Ascending aorta (tissue), 2 donors: ENCODE measurements at regions of chr5 and their contacts with region 1.

Region 1: DNA sequence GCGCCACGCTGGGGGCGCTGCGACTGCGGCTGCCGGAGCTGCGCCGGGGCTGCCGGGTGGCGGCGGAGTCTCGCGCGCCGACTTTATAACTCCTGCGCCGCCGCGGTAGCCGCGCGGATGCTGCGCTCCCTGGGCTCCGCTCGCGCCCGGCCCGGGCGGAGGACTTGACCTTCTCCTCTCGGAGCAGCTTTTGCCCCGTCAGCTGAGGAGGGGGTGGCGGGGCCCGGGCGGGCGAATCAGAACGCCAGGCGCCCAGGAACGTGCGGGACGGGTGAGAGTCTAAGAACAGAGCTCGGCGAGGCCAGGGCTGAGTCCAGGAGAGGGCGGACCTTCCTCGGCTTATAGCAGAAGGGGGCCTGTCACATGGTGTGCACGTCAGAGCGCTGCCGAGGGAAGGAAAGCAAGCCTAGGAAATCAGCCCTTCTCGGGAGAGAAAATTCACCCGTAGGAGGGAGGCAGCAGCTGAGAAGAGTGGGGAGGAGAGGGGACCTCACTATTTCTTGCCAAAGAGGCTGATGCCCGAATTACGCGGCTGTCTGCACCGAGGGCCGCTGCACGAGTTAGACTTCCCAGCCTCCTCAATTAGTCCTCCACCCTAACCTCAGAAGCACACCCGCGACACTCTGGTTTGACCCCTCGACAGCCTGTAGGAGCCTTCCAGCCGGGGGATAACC is at the start of gene FOXD1:
- DNase-seq: peak; percentile 81 to 95
- H3K4me3 ChIP-seq: peak within 1 kb of the TSS; percentile 68 to 86
- H3K27ac ChIP-seq: peak within 1 kb of the TSS; percentile 89 to 96
- H3K4me1 ChIP-seq: peaks cover 3 to 13% of the 10 kb centered on the region in 2 donors
- H3K27me3 ChIP-seq: no peaks in the 10 kb centered on the region
- CTCF ChIP-seq: no peak
- total RNA-seq, gene FOXD1: 7.1 TPM

Region 2: GRCh38 chr5:72847989-72848473 is 600.6 kb before region 1 on chr5:
- intact Hi-C with region 1: no loop called
- DNase-seq: peak; percentile 59 to 94
- H3K4me3 ChIP-seq: peak overlapping the region; percentile 89 to 97
- H3K27ac ChIP-seq: peak overlapping the region; percentile 90 to 94
- H3K4me1 ChIP-seq: peaks cover 8 to 41% of the 10 kb centered on the region in 2 donors
- H3K27me3 ChIP-seq: no peaks in the 10 kb centered on the region
- CTCF ChIP-seq: peak in 2 of 3 experiments; percentile 3 to 17

Region 3: GRCh38 chr5:73088026-73088425 is 360.6 kb before region 1 on chr5:
- intact Hi-C with region 1: loop called (anchors 2 kb)
- DNase-seq: no peak
- H3K4me3 ChIP-seq: no peak overlapping the region
- H3K27ac ChIP-seq: no peak overlapping the region
- H3K4me1 ChIP-seq: no peaks in the 10 kb centered on the region
- H3K27me3 ChIP-seq: no peaks in the 10 kb centered on the region
- CTCF ChIP-seq: no peak

Region 4: DNA sequence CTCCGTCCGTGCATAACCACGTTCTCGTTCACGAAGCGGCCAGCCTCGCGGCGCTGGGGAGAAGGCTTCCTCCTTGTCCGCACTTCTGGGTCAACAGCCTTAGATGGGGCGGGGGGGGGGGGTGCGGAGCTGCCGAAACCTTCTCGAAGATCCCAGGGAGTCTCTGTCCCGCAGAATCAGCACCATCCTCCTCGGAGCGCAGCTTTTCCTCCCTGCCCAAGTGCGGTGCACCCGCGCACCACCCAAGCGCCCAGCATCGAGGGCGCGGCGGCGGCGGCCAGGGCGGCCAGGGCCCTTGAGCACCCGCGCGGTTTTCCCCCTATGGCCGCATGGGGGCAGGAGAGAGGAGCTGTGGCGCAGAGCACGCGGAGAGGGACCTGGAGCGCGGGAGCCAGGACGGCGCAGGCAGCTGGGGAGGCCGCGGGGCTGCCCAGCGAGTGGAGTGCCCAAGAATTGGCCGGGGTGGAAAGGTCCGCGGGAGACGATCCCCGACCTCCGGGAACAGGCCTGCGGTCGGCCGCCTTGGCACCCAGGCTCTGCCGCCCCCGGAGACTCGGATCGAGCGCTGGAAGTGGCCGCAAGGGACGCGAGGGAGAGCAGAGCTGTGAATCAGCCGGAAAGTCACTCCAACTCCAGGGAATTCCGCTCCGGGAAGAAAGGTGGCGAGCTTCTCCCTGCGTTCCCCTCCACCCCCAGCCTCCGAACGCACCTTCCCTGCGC is 232.5 kb before region 1 on chr5:
- intact Hi-C with region 1: loop called (anchors 1 kb)
- DNase-seq: peak in 1 of 2 donors; percentile 90
- H3K4me3 ChIP-seq: peak overlapping the region; percentile 43 to 63
- H3K27ac ChIP-seq: peak overlapping the region; percentile 38 to 70
- H3K4me1 ChIP-seq: no peaks in the 10 kb centered on the region
- H3K27me3 ChIP-seq: no peaks in the 10 kb centered on the region
- CTCF ChIP-seq: peak; percentile 77 to 89 (median 88)

Region 5: GRCh38 chr5:73280821-73281746 is 167.5 kb before region 1 on chr5:
- intact Hi-C with region 1: loop called (anchors 2 kb)
- DNase-seq: peak in 1 of 2 donors; percentile 87
- H3K4me3 ChIP-seq: peak overlapping the region; percentile 2 to 10
- H3K27ac ChIP-seq: peak overlapping the region; percentile 76 to 87
- H3K4me1 ChIP-seq: peaks cover 0 to 33% of the 10 kb centered on the region in 2 donors
- H3K27me3 ChIP-seq: no peaks in the 10 kb centered on the region
- CTCF ChIP-seq: no peak

Region 6: DNA sequence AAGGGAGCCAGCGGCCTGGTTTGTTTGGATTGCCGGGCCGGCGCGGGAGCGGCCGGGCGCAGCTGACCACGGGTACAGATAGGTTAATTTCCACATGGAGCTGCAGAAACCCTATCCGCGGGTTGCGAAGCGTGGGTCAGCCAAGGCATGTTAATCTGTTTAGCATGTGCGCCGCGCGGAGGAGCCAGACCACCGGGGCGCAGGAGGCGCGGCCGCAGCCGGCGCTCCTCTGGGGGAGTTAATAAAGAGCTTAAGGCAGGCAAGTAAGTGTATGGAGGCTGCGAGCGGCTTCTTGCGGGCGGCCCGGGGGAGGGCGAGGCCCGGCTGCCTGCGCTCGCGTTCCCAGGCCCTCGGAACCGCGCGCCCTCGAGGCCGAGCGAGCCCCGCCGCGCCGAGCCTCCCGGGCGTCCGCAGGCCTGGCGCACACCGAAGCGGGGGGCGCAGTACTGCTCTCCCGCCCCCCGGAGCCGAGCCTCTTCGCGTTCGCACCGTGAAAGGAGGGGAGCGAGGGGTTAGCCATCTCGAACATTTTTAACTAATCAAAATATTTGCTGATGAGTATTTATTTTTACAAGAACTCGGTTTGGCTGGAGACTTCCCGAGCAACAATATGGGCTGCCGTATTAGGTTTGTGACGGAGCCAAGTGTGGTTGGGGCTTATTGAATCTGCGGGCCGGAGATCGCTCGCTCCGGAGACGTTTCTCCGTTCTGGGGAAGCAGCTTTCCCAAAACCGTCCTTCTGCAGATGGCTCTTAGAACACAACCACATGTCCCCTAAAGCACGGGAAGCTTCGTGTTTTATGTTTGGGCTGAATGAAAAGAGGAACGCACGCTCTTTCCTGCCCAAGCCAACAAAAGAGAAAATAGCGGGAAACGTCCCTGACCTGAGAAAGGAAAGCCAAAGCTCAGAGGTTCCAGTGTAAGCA is 28.9 kb before region 1 on chr5:
- intact Hi-C with region 1: loop called (anchors 2 kb)
- DNase-seq: peak in 1 of 2 donors; percentile 80
- H3K4me3 ChIP-seq: peak overlapping the region; percentile 49 to 67
- H3K27ac ChIP-seq: peak overlapping the region; percentile 60 to 74
- H3K4me1 ChIP-seq: peaks cover 9 to 13% of the 10 kb centered on the region in 2 donors
- H3K27me3 ChIP-seq: no peaks in the 10 kb centered on the region
- CTCF ChIP-seq: no peak

Region 7: GRCh38 chr5:73498057-73499008 is 49.7 kb after region 1 on chr5 and contains the start of gene BTF3:
- intact Hi-C with region 1: loop called (anchors 5 kb)
- DNase-seq: peak; percentile 85 to 98
- H3K4me3 ChIP-seq: peak within 1 kb of the TSS; percentile 89 to 98
- H3K27ac ChIP-seq: peak within 1 kb of the TSS; percentile 92 to 97
- H3K4me1 ChIP-seq: peaks cover 3 to 22% of the 10 kb centered on the region in 2 donors
- H3K27me3 ChIP-seq: no peaks in the 10 kb centered on the region
- CTCF ChIP-seq: no peak
- total RNA-seq, gene BTF3: 235 TPM